AG04449 (cell line): ENCODE measurements at regions of chr3 and their contacts with region 1.

Region 1: DNA sequence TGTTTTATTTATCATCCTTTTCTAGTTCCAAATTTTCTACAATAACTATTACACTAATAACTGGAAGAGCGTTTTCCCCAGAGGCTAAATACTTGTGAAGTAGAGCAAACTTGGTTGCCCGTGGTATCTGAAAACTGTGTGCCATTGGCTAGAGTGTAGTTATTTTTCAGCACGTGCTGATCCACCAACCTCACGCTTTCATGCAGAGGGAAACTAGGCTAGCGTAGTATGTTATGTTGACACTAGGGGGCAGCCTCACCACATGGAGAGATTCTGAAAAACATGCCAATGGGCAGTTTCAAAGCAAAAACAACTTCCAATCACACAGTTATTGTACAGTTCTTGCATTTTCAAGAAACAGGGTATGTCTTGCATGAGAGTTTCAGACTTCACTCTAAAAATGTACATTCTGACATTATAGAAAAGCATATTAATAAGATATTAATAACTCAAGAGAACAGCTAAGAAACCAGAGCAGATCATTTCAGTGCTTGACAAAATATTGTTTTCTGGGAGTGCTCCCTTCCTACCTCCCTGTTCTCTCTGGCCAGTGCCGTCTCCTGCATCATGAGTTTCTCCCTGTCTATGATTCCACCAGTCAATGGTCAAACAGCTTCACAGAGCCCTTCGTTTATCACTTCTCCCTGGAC is 39.7 kb downstream of the SPATA12 start:
- DNase-seq: peak; percentile 36
- H3K4me3 ChIP-seq: no peak overlapping the region
- CTCF ChIP-seq: peak; percentile 79

Region 2: DNA sequence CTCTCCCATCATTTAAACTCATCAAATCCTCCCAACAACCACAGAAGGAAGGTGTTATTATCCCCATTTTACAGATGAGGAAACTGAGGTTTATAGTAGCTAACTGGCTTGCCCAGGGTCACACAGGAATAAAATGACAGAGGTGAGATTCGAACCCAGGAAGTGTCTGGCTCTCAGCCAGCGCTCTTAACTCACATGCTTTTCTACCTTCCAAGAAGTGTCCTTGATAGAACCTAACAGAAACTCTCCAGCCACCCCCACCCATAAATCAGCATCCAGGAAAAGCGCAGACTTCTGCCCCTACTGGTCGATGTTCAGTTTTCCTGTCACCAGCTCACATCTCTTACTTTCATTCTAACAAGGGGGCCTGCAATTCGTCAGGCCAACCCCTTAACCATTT is 12.0 kb after region 1 on chr3:
- CTCF ChIA-PET with region 1: interaction called, 28 read pairs
- POLR2A ChIA-PET with region 1: no interaction called
- DNase-seq: no peak
- H3K4me3 ChIP-seq: no peak overlapping the region
- CTCF ChIP-seq: no peak

Region 3: DNA sequence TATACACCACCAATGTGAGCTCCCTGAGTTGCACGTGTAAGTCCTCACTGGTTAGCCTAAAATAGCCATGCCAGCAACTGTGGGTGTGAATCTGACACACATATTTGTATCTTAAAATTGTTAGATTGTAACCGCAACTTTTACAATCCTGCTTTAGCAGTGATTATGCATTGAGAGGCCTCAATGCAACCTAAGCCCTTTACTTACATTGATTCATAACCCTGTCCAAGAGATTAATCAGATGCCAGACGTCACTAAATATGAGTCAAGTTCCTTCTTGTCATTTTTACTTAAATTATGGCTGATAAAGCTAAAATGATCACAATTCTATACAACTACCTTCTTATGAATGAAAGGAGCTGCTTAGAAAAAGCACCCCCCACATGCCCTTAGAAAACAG is 18.1 kb after region 1 on chr3:
- CTCF ChIA-PET with region 1: interaction called, 10 read pairs
- POLR2A ChIA-PET with region 1: no interaction called
- DNase-seq: no peak
- H3K4me3 ChIP-seq: no peak overlapping the region
- CTCF ChIP-seq: no peak

Region 4: GRCh38 chr3:57141719-57142410 is 41.7 kb after region 1 on chr3:
- CTCF ChIA-PET with region 1: interaction called, 10 read pairs
- POLR2A ChIA-PET with region 1: no interaction called
- DNase-seq: no peak
- H3K4me3 ChIP-seq: no peak overlapping the region
- CTCF ChIP-seq: no peak

Region 5: GRCh38 chr3:57169872-57170623 is 69.9 kb after region 1 on chr3:
- CTCF ChIA-PET with region 1: interaction called, 15 read pairs
- POLR2A ChIA-PET with region 1: no interaction called
- DNase-seq: no peak
- H3K4me3 ChIP-seq: peak overlapping the region; percentile 50
- CTCF ChIP-seq: peak; percentile 85

Region 6: DNA sequence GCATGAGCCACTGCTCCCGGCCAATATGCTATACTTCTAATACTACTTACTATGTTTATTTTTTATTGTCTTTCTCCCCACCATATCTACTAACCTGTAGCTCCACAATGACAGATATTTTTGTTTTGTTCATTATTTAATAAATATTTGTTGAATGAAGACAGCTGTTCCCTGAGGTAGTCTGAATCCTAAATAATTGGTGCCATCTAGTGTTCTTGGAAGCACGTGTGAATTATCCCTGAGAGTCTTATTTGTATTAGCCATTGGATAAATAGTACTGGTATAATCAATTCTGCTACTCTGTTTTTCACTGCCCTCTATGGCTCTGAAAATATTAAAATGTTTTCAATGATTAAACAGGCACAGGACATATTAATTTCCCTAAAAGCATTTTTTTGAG is 121.7 kb after region 1 on chr3:
- CTCF ChIA-PET with region 1: interaction called, 69 read pairs
- POLR2A ChIA-PET with region 1: no interaction called
- DNase-seq: no peak
- H3K4me3 ChIP-seq: no peak overlapping the region
- CTCF ChIP-seq: no peak

Region 7: GRCh38 chr3:57627976-57628375 is 527.8 kb after region 1 on chr3:
- CTCF ChIA-PET with region 1: no interaction called
- POLR2A ChIA-PET with region 1: no interaction called
- DNase-seq: no peak
- H3K4me3 ChIP-seq: no peak overlapping the region
- CTCF ChIP-seq: no peak